ENCODE measurements at regions of chr16 and their contacts with region 1.

Region 1: DNA sequence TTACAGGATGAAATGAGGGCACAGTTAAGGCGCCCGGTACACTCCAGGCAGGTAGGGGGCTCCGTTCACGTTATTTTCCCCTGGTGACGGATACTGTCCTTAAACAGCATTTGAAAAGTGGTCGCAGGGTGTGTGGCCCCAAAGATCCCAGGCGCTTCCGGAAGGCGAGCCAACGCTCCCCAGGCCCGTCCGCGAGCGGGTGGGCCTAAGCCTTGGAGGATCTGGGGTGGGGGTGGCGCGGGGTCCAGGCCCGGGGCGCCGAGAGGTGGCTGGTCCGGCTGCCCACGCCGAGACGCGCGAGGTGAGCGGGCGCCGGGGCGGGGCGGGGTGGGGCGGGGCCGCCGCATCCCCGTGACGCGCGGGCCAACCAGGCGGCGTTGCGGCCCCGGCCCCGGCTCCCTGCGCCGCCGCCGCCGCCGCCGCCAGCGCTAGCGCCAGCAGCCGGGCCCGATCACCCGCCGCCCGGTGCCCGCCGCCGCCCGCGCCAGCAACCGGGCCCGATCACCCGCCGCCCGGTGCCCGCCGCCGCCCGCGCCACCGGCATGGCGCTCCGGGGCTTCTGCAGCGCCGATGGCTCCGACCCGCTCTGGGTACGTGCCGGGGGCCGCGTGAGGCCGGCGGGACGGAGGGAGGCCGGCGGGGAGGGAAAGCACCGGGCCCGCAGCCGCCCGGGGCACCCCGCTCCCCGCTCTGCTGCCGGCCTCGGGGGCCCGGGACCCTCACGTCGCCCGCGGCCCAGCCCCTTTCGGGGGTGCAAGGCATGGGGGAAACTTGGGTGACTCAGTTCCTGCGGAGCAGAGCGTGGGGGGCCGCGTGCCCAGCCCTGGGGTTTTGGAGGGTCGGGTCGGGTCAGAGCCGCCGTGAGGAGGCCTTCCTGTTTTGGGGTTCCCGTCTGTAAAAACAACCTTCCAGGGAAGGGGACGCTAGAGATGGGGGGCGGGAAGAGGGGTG is at the start of gene ABCC1:
- DNase-seq: peak; percentile 23 to 56
- ATAC-seq: peak; percentile 43 to 89 (median 74)
- H3K4me3 ChIP-seq: peak within 1 kb of the TSS; percentile 61 to 94 (median 86)
- H3K27ac ChIP-seq: peak within 1 kb of the TSS; percentile 42 to 94 (median 83)
- H3K4me1 ChIP-seq: peaks cover 0 to 49% (median 32%) of the 10 kb centered on the region in 9 donors
- H3K27me3 ChIP-seq: no peaks in the 10 kb centered on the region
- CTCF ChIP-seq: peak in 1 of 9 donors; percentile 13
- total RNA-seq, gene ABCC1: 15.1 to 32.8 (median 22.0) TPM

Region 2: GRCh38 chr16:15704545-15704987 is 244.9 kb before region 1 on chr16:
- intact Hi-C with region 1: no loop called
- DNase-seq: peak; percentile 68 to 81
- ATAC-seq: peak; percentile 57 to 91 (median 84)
- H3K4me3 ChIP-seq: no peak overlapping the region
- H3K27ac ChIP-seq: no peak overlapping the region
- H3K4me1 ChIP-seq: peaks cover 0 to 14% (median 0%) of the 10 kb centered on the region in 9 donors
- H3K27me3 ChIP-seq: no peaks in the 10 kb centered on the region
- CTCF ChIP-seq: peak; percentile 63 to 87 (median 83)

Region 3: GRCh38 chr16:15899538-15900100 is 49.9 kb before region 1 on chr16:
- intact Hi-C with region 1: loop called in 1 of 10 experiments (anchors 10 kb)
- DNase-seq: no peak
- ATAC-seq: no peak
- H3K4me3 ChIP-seq: no peak overlapping the region
- H3K27ac ChIP-seq: no peak overlapping the region
- H3K4me1 ChIP-seq: peaks cover 0 to 5% (median 0%) of the 10 kb centered on the region in 9 donors
- H3K27me3 ChIP-seq: no peaks in the 10 kb centered on the region
- CTCF ChIP-seq: no peak

Region 4: DNA sequence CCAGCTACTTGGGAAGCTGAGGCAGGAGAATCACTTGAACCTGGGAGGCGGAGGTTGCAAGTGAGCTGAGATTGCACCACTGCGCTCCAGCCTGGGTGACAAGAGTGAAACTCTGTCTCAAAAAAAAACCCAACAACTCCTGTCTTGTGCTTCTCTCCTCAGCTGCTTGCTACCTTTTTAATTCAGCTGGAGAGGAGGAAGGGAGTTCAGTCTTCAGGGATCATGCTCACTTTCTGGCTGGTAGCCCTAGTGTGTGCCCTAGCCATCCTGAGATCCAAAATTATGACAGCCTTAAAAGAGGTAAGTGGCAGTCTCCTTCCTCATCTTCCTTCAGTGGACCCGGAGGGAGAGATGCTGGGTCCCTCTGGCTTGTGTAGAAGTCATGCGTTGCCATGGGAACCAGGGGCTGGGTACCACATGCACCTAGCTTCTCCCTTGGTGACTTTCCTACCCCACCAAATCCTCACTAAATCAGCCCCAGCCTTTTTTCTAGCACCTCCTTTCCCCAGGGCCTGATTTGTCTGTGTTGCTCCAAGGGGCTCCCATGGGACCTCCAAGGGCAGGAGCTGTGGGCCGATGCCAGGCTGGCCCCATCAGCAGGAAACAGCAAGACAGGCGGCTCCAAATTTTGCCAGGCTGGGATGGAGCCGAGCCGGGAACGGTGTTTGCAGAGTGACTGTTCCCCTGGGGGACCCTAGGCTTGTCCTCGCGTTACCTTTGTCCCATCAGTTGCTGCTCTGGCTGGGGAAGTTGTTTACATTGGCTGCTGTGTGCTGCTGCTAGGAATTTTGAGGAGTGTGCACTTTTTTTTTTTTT is 65.1 kb after region 1 on chr16:
- intact Hi-C with region 1: loop called in 1 of 10 experiments (anchors 10 kb)
- DNase-seq: peak; percentile 71
- ATAC-seq: peak; percentile 76 to 93 (median 88)
- H3K4me3 ChIP-seq: no peak overlapping the region
- H3K27ac ChIP-seq: peak overlapping the region in 3 of 10 donors; percentile 21 to 44 (median 25)
- H3K4me1 ChIP-seq: peaks cover 3 to 26% (median 13%) of the 10 kb centered on the region in 9 donors
- H3K27me3 ChIP-seq: no peaks in the 10 kb centered on the region
- CTCF ChIP-seq: no peak

Region 5: DNA sequence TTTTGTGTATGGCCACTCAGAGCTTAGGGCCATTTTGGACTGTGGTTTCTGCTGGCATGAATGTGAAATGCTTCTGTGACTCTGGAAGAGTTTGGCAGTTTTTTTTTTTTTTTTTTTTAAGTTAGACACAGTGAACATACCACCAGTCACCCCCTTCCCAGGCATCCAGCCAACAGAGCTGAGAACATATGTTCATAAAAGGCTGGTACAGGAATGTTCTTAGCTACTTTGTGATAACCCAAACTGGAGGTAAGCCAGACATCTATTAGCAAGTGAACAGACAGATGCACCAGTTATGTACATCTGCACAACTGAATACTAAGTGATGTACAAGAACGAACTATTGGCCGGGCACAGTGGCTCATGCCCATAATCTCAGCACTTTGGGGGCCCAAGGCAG is 92.6 kb after region 1 on chr16:
- intact Hi-C with region 1: loop called in 1 of 10 experiments (anchors 10 kb)
- DNase-seq: peak; percentile 27 to 60
- ATAC-seq: peak in 6 of 8 donors; percentile 59 to 93 (median 72)
- H3K4me3 ChIP-seq: no peak overlapping the region
- H3K27ac ChIP-seq: peak overlapping the region in 3 of 10 donors; percentile 20 to 50 (median 48)
- H3K4me1 ChIP-seq: peaks cover 0 to 25% (median 6%) of the 10 kb centered on the region in 9 donors
- H3K27me3 ChIP-seq: no peaks in the 10 kb centered on the region
- CTCF ChIP-seq: no peak

Region 6: GRCh38 chr16:16096121-16096857 is 146.8 kb after region 1 on chr16:
- intact Hi-C with region 1: loop called in 1 of 10 experiments (anchors 10 kb)
- DNase-seq: no peak
- ATAC-seq: peak in 3 of 8 donors; percentile 29 to 63 (median 38)
- H3K4me3 ChIP-seq: no peak overlapping the region
- H3K27ac ChIP-seq: peak overlapping the region in 1 of 10 donors; percentile 56
- H3K4me1 ChIP-seq: peaks cover 0 to 24% (median 6%) of the 10 kb centered on the region in 9 donors
- H3K27me3 ChIP-seq: no peaks in the 10 kb centered on the region
- CTCF ChIP-seq: peak in 2 of 9 donors; percentile 6 to 17

Measured in heart right ventricle (tissue), 16 donors.